ENCODE measurements at regions of chr2 and their contacts with region 1.

Region 1: DNA sequence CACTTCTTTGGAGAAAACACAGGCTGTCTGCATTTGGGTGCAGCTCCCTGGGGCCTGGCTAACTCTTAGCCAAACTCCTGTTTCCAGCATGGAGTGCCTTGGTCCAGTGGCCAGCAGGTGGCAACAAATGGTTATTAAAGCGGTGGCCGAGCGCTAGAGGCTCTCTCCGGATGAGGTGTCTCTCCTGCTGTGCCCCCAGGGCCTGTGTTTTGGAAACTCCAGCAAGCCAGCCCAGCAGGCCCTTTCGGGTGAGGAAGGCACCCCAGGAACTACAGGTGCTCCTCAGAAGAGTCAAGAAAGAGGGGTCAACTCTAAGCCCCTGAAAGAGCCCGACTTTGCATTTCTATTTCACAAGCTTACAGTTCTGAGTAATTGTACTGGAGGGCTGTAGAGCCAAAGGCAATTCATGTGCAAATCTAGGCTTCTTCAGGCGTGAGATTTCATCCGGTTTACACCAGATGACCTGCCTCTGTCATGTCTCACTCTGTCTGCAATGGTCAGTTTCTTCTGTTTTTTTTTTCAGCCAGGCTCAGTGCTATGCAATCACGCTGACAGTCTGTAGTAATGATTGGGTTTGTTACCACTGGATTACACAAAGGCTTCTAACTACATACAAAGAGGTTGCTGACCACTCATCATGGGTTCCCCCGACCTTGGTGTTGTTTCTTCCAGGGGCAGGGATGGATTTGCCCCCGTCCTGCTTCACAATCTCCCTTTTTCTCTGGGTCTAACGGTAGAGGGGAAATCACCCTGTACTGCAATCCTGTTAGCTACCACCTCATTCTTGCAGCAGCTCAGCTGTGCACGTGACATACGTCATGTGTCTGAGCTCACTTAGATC is 7.6 kb upstream of the CHRNA1 start:
- DNase-seq: peak; percentile 46 to 58 (median 58)
- H3K4me3 ChIP-seq: peak overlapping the region in 1 of 7 experiments; percentile 48
- H3K27ac ChIP-seq: no peak overlapping the region
- H3K4me1 ChIP-seq: peaks cover 0 to 2% (median 0%) of the 10 kb centered on the region in 4 experiments
- H3K27me3 ChIP-seq: peaks cover 0 to 12% (median 4%) of the 10 kb centered on the region in 5 experiments

Region 2: GRCh38 chr2:174644401-174644800 is 127.5 kb before region 1 on chr2:
- CTCF ChIA-PET with region 1: no interaction called
- POLR2A ChIA-PET with region 1: no interaction called
- DNase-seq: no peak
- H3K4me3 ChIP-seq: no peak overlapping the region
- H3K27ac ChIP-seq: no peak overlapping the region
- H3K4me1 ChIP-seq: no peaks in the 10 kb centered on the region
- H3K27me3 ChIP-seq: no peaks in the 10 kb centered on the region

Region 3: GRCh38 chr2:174815526-174815925 is 43.7 kb after region 1 on chr2:
- CTCF ChIA-PET with region 1: no interaction called
- POLR2A ChIA-PET with region 1: no interaction called
- DNase-seq: no peak
- H3K4me3 ChIP-seq: no peak overlapping the region
- H3K27ac ChIP-seq: no peak overlapping the region
- H3K4me1 ChIP-seq: no peaks in the 10 kb centered on the region
- H3K27me3 ChIP-seq: peaks cover 0 to 4% (median 0%) of the 10 kb centered on the region in 5 experiments

Region 4: DNA sequence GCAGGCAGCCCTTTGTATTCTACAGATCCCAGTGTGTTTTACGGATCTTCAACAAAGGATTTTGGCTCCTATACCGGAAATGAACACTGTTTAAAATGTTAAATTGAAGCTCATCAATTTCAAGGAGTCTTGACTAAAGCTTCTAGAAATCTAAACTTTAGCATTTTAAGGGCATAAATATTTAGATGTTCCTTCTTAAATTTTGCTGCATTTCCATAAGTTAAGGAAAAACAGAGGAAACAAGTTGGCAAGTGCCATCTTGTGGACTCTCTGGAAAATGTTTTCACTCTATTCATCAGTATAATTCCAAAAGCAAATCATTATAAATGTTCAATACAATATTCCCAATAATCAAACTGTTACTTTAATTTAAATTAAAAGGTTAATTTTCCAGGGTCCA is 213.8 kb after region 1 on chr2:
- CTCF ChIA-PET with region 1: interaction called, 87 read pairs
- POLR2A ChIA-PET with region 1: no interaction called
- DNase-seq: no peak
- H3K4me3 ChIP-seq: no peak overlapping the region
- H3K27ac ChIP-seq: no peak overlapping the region
- H3K4me1 ChIP-seq: no peaks in the 10 kb centered on the region
- H3K27me3 ChIP-seq: peaks cover under 1 to 11% (median 4%) of the 10 kb centered on the region in 5 experiments

Region 5: GRCh38 chr2:174992886-174993285 is 221.0 kb after region 1 on chr2:
- CTCF ChIA-PET with region 1: interaction called, 87 read pairs
- POLR2A ChIA-PET with region 1: no interaction called
- DNase-seq: no peak
- H3K4me3 ChIP-seq: no peak overlapping the region
- H3K27ac ChIP-seq: no peak overlapping the region
- H3K4me1 ChIP-seq: no peaks in the 10 kb centered on the region
- H3K27me3 ChIP-seq: peaks cover 0 to 35% (median 14%) of the 10 kb centered on the region in 5 experiments

Measured in common myeloid progenitor, CD34-positive (primary cell).